Esophagus muscularis mucosa (tissue), 4 donors: ENCODE measurements at regions of chr6 and their contacts with region 1.

Region 1: GRCh38 chr6:29016559-29017427 is 11.7 kb upstream of the ZNF311 start:
- DNase-seq: no peak
- H3K4me3 ChIP-seq: peak overlapping the region; percentile 55 to 67 (median 56)
- H3K27ac ChIP-seq: peak overlapping the region in 1 of 4 donors; percentile 35
- H3K4me1 ChIP-seq: peaks cover 0 to 27% (median 12%) of the 10 kb centered on the region in 4 donors
- H3K27me3 ChIP-seq: peaks cover 0 to 49% (median 17%) of the 10 kb centered on the region in 4 donors
- CTCF ChIP-seq: peak; percentile 68 to 76 (median 71)
- EP300 ChIP-seq: no peak
- POLR2A ChIP-seq: no peak

Region 2: DNA sequence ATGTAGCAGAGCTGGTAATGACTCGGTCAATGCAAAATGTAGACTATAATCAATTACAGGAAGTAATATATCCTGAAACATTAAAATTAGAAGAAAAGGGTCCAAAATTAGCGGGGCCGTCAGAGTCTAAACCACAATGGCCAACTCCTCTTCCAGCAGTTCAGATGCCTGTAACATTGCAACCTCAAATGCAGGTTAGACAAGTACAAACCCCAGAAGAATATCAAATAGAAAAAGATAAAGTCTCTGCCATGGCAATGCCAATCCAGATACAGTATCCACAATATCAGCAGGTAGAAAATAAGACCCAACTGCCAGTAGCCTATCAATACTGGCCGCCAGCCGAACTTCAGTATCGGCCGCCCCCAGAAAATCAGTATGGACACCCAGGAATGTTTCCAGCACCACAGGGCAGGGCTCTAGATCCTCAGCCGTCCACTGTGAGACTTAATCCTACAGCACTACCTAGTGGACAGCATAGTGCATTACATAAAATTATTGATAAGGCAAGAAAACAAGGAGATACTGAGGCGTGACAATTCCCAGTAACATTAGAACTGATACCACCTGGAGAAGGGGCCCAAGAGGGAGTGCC is 332.8 kb before region 1 on chr6:
- intact Hi-C with region 1: loop called (anchors 2 kb)
- DNase-seq: no peak
- H3K4me3 ChIP-seq: no peak overlapping the region
- H3K27ac ChIP-seq: no peak overlapping the region
- H3K4me1 ChIP-seq: peaks cover 0 to 9% (median 6%) of the 10 kb centered on the region in 4 donors
- H3K27me3 ChIP-seq: peaks cover 0 to 72% (median 3%) of the 10 kb centered on the region in 4 donors
- CTCF ChIP-seq: peak; percentile 33 to 44 (median 39)
- EP300 ChIP-seq: no peak
- POLR2A ChIP-seq: no peak

Region 3: DNA sequence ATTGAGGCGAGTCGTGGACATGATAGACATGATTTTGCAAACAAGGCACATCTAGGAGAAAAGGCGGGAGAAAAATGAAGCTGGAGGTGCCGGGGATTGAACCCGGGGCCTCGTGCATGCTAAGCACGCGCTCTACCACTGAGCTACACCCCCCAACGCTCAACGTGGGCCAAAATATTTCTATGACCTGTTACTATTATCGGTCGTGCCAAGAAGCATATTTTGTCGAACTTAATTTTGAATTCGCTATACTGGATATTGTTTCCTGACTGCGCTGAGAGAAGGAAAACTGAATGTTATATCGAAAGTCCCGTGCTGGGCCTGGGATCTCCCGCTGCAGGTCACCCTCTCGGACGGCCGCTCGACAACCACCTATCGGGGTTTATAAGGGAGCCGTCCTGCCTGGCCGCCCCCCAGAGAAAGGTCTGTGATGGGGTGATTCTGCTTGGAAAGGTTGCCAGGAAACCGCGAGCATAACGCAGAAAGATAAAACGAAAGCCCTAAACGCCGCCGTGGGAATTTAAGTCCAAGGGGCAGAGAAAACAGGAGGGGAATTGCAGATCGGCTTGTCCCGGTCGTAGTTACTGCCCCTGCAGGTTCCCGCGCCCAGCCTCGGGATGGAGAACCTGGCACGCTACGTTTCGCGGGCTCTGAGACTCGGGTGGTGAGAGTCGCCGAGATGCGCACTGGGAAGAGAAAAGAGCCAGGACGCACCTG is 153.0 kb before region 1 on chr6:
- intact Hi-C with region 1: loop called (anchors 10 kb)
- DNase-seq: peak; percentile 95
- H3K4me3 ChIP-seq: peak overlapping the region; percentile 75 to 79 (median 76)
- H3K27ac ChIP-seq: peak overlapping the region; percentile 74 to 82 (median 82)
- H3K4me1 ChIP-seq: peaks cover 15 to 19% (median 16%) of the 10 kb centered on the region in 4 donors
- H3K27me3 ChIP-seq: no peaks in the 10 kb centered on the region
- CTCF ChIP-seq: no peak
- EP300 ChIP-seq: no peak
- POLR2A ChIP-seq: no peak

Region 4: DNA sequence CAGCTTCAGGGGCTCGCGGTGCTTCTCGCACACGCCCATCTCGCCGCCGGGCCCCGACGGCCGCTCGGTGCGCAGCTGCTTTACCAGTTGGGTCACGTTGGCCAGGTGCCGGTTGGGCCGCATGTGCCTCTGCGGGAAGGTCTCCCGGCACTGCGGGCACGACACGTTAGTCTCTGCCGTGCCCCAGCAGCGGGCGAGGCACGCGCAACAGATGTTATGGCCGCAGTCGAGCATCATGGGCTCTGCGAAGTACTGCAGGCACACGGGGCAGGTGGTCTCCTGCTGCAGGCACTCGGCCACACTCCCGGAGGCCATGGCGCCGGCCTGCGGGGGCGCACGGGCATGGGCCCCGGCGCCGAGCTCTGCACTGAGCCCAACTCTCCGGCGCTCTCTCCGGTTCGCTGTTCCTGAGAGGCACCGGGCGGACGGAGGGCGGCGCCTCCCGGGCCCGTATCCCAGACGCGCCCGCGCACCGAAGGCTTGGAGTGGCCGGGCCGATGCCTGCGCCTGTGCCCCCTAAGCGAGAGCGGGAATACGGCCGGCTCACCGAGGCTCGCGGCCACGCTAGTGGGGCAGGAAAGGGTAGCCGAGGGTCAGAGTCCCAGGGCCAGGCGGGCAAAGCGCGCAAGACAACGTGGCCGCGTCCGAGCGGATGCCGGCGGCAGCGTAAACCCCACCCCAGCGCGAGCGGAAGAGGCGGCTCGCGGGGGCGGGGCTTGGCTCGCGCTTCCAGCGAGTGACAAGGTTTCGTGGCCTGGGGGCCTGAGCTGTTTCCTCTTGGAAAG is 93.3 kb before region 1 on chr6 and contains the start of gene TRIM27:
- intact Hi-C with region 1: loop called (anchors 5 kb)
- DNase-seq: peak; percentile 97
- H3K4me3 ChIP-seq: peak within 1 kb of the TSS; percentile 73 to 96 (median 84)
- H3K27ac ChIP-seq: peak within 1 kb of the TSS; percentile 84 to 98 (median 96)
- H3K4me1 ChIP-seq: peaks cover 18 to 38% (median 28%) of the 10 kb centered on the region in 4 donors
- H3K27me3 ChIP-seq: no peaks in the 10 kb centered on the region
- CTCF ChIP-seq: no peak
- EP300 ChIP-seq: no peak
- POLR2A ChIP-seq: peak; percentile 65
- total RNA-seq, gene TRIM27: 31.1 to 42.2 (median 36.0) TPM

Region 5: DNA sequence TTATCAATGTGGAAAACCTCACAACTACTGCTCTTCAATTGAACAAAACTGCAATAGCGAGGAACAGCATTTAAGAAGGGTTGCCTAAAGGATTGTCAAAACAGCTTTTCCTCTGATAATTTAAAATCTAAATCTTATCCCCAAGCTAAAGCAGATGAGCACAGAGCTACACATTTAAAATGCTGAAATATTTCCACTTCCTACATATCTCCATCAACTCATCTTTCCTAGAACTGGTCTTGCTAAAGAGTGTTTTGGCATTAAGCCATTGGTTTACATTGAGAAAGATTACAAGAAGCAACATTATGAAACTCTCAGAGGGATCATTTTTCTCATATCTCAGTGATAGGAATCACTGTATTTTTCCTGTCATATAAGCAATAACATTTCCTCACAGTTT is 425.9 kb after region 1 on chr6:
- intact Hi-C with region 1: no loop called
- DNase-seq: no peak
- H3K4me3 ChIP-seq: no peak overlapping the region
- H3K27ac ChIP-seq: no peak overlapping the region
- H3K4me1 ChIP-seq: no peaks in the 10 kb centered on the region
- H3K27me3 ChIP-seq: peaks cover 0 to 11% (median 0%) of the 10 kb centered on the region in 4 donors
- CTCF ChIP-seq: no peak
- EP300 ChIP-seq: no peak
- POLR2A ChIP-seq: no peak